ENCODE measurements at regions of chr14 and their contacts with region 1.

Region 1: GRCh38 chr14:88189417-88190191 is 133.5 kb downstream of the KCNK10 start:
- DNase-seq: peak; percentile 67 to 87
- ATAC-seq: peak; percentile 90 to 98
- H3K4me3 ChIP-seq: no peak overlapping the region
- H3K27ac ChIP-seq: no peak overlapping the region
- H3K4me1 ChIP-seq: peaks cover 4% of the 10 kb centered on the region; the same call in 1 of the 3 replicates
- CTCF ChIP-seq: peak; percentile 74
- EP300 ChIP-seq: no peak
- POLR2A ChIP-seq: no peak
- RAD21 ChIP-seq: peak; percentile 78 to 81

Region 2: DNA sequence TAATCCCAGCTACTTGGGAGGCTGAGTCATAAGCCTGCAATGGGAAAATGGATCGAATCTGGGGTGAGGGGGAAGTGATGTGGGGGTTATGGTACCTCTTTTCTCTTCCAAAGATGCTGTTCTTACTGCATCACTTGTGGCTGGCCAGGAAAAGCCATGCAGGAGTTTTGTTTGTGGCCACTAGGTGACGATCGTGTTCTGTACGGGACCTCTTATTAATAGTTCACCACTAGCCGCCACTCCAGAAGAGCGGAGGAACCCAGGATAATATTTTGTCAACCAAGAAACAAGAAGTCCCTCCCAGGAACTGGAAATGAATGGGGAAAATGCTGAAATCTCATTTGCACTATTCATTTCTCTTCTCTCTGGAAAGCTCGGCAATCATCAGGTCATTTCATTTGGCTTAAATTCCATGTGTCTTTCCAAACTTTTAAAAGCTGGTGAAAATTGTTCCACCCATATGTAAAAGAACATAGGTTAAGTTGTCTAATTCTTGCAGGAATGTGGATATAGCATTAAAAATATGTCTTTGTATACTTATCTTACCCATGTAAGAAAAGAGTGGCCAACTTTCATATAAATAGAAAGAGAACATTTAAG is 175.8 kb before region 1 on chr14:
- CTCF ChIA-PET with region 1: interaction called, 14 read pairs
- POLR2A ChIA-PET with region 1: no interaction called
- DNase-seq: peak; percentile 63 to 84
- ATAC-seq: peak; percentile 99 to 100
- H3K4me3 ChIP-seq: no peak overlapping the region
- H3K27ac ChIP-seq: peak overlapping the region in 1 of 2 experiments; percentile 29; a peak in 1 of 6 replicates
- H3K4me1 ChIP-seq: no peaks in the 10 kb centered on the region
- CTCF ChIP-seq: peak; percentile 95
- EP300 ChIP-seq: no peak
- POLR2A ChIP-seq: no peak
- RAD21 ChIP-seq: peak; percentile 94 to 96

Region 3: GRCh38 chr14:88168498-88169165 is 21.0 kb before region 1 on chr14:
- CTCF ChIA-PET with region 1: interaction called, 15 read pairs
- POLR2A ChIA-PET with region 1: no interaction called
- DNase-seq: peak; percentile 18 to 55
- ATAC-seq: peak; percentile 87 to 93
- H3K4me3 ChIP-seq: no peak overlapping the region
- H3K27ac ChIP-seq: no peak overlapping the region
- H3K4me1 ChIP-seq: peaks cover 7% of the 10 kb centered on the region; the same call in 2 of the 3 replicates
- CTCF ChIP-seq: peak; percentile 54
- EP300 ChIP-seq: no peak
- POLR2A ChIP-seq: no peak
- RAD21 ChIP-seq: peak; percentile 52 to 64

Region 4: GRCh38 chr14:88209273-88209672 is 19.7 kb after region 1 on chr14:
- CTCF ChIA-PET with region 1: interaction called, 14 read pairs
- POLR2A ChIA-PET with region 1: no interaction called
- DNase-seq: no peak
- ATAC-seq: no peak
- H3K4me3 ChIP-seq: no peak overlapping the region
- H3K27ac ChIP-seq: no peak overlapping the region
- H3K4me1 ChIP-seq: no peaks in the 10 kb centered on the region
- CTCF ChIP-seq: no peak
- EP300 ChIP-seq: no peak
- POLR2A ChIP-seq: no peak
- RAD21 ChIP-seq: no peak

Region 5: DNA sequence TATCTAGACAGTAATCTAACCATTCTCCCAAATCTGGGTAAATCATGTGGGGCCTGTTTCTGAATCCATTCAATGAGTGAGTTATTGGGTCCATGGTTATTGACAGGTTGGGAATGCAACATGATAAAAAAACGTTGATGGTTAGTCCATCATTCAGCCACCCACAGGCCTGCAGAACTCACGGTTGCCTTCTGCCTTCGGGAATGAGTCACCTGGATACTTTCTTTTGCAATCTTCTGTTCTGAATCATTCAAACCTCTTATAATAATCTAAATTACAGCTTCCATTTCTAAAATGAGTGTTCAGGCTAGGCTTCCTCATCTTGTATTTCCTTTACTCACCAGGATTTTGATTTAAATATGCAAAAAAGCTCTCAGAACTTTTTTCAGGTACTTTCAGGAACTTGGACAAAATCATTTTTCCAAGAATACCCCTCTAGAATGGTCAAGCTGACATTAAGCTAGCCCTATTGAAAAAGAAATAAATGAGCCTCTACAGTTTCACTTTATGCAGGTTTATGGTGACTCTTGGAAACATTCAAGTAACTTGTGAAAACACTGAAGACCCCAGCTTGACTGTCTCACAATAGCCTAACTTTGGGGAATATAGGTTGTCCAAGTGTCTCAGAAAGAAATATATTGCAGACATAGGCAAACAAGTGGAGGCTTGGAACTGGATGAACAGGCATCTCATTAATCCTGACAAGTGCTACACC is 39.1 kb after region 1 on chr14:
- CTCF ChIA-PET with region 1: interaction called, 14 read pairs
- POLR2A ChIA-PET with region 1: no interaction called
- DNase-seq: no peak
- ATAC-seq: no peak
- H3K4me3 ChIP-seq: no peak overlapping the region
- H3K27ac ChIP-seq: no peak overlapping the region
- H3K4me1 ChIP-seq: no peaks in the 10 kb centered on the region
- CTCF ChIP-seq: no peak
- EP300 ChIP-seq: no peak
- POLR2A ChIP-seq: no peak
- RAD21 ChIP-seq: no peak

Region 6: GRCh38 chr14:88385345-88386101 is 195.9 kb after region 1 on chr14 and contains the start of gene SPATA7:
- CTCF ChIA-PET with region 1: interaction called, 76 read pairs
- POLR2A ChIA-PET with region 1: no interaction called
- DNase-seq: peak; percentile 80 to 86
- ATAC-seq: peak; percentile 98 to 99
- H3K4me3 ChIP-seq: peak within 1 kb of the TSS; percentile 79
- H3K27ac ChIP-seq: peak within 1 kb of the TSS; percentile 83 to 86
- H3K4me1 ChIP-seq: peaks cover 22% of the 10 kb centered on the region; the same call in 2 of the 3 replicates
- CTCF ChIP-seq: no peak
- EP300 ChIP-seq: no peak
- POLR2A ChIP-seq: peak; percentile 76
- RAD21 ChIP-seq: no peak
- polyA plus RNA-seq, gene SPATA7: 9.3 and 11.2 TPM in 2 replicates

Region 7: GRCh38 chr14:88492272-88493089 is 302.9 kb after region 1 on chr14:
- CTCF ChIA-PET with region 1: interaction called, 10 read pairs
- POLR2A ChIA-PET with region 1: no interaction called
- DNase-seq: peak; percentile 79 to 81
- ATAC-seq: peak; percentile 87 to 97
- H3K4me3 ChIP-seq: no peak overlapping the region
- H3K27ac ChIP-seq: no peak overlapping the region
- H3K4me1 ChIP-seq: no peaks in the 10 kb centered on the region
- CTCF ChIP-seq: peak; percentile 80
- EP300 ChIP-seq: no peak
- POLR2A ChIP-seq: no peak
- RAD21 ChIP-seq: peak; percentile 71 to 80

Measured in A549 (cell line).